Activated CD8-positive, alpha-beta T cell treated with anti-CD3 and anti-CD28 coated beads for 36 hours (primary cell): ENCODE measurements at regions of chr10 and their contacts with region 1.

Region 1: DNA sequence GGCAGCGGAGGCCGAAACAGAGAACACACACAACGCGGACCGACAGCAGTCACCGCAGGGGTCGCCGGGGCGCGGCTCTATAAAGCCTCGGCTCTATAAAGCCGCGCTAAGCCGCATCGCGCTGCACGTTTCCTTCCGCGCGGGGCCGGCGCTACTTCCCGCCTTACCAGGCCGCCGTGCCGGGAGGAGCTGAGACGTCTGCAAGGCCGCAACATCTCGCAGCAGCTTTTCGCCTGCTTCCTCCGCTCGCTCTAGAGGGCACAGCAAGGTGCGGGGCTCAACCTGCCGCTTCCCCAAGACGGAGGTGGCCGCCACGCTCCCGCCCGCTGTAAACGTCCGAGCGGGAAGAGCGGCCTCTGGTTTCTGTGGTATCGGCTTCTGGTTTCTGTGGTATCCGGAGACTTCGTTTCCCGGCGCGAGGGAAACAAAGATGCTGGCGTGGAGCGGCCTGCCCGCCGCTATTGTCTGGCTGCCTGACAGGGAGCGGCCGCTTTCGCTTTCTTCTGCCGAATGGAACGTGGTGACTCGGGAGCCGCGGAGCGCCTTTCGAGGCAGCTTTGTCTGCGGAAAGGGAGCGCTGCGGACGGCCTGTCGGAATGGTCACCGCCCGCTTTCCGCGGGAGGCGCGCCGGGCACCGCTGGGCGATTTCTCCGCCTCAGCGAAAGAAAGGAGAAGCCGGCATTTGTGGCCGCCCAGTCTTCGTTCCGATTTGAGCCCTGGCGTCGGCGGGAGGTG is 91.8 kb downstream of the SPAG6 start:
- DNase-seq: peak; percentile 89
- ATAC-seq: peak; percentile 86
- H3K4me3 Mint-ChIP-seq: peak overlapping the region; percentile 88
- H3K27ac Mint-ChIP-seq: peak overlapping the region; percentile 95
- H3K4me1 Mint-ChIP-seq: peaks cover 47% of the 10 kb centered on the region
- H3K27me3 Mint-ChIP-seq: no peaks in the 10 kb centered on the region
- CTCF ChIP-seq: no peak

Region 2: DNA sequence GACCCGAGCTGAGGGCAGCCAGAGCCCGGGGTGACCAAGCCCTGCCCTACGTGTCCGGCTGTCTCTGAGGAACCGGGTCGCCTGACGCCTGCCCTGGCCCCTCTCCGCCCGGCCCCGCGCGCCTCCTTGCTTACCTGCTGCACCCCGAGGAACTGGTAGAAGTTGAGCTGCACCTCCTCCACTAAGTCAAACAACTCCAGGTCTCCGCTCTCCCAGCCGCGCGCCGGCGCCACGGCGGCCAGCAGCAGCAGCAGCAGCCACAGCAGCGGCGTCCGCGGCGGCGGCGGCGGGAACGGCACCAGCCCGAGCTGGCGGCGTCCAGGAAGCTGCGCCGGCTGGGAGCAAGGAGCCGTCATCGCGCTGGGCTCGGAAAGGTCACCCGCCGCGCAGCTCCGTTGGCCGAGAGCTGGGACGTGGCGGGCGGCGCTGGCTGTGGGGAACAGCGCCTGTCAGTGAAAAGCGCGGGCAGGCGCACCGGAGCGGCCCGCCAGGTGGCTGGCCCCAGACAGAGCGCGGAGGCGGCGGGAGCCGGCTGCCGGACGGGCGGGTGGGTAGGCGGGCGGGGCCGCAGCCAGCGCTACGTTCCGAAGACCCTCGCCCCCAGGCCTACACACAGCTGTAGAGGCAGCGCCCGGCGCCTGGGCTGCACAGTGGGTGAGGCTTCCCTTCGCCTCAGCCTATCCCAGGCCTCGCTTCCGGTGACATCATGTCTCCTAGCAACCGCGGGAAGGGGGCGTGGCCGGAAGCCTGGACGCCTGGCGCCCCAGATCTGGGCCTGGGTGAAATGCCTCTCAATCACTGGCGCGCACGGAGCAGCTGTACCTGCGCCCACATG is 433.8 kb before region 1 on chr10 and contains the start of gene DNAJC1:
- CTCF ChIA-PET with region 1: no interaction called
- POLR2A ChIA-PET with region 1: interaction called, 3 read pairs
- intact Hi-C with region 1: loop called (anchors 10 kb)
- DNase-seq: peak; percentile 99
- ATAC-seq: peak; percentile 93
- H3K4me3 Mint-ChIP-seq: peak within 1 kb of the TSS; percentile 89
- H3K27ac Mint-ChIP-seq: peak within 1 kb of the TSS; percentile 92
- H3K4me1 Mint-ChIP-seq: peaks cover 27% of the 10 kb centered on the region
- H3K27me3 Mint-ChIP-seq: peaks cover 4% of the 10 kb centered on the region
- CTCF ChIP-seq: no peak
- total RNA-seq, gene DNAJC1: 19.3 to 23.7 TPM

Region 3: DNA sequence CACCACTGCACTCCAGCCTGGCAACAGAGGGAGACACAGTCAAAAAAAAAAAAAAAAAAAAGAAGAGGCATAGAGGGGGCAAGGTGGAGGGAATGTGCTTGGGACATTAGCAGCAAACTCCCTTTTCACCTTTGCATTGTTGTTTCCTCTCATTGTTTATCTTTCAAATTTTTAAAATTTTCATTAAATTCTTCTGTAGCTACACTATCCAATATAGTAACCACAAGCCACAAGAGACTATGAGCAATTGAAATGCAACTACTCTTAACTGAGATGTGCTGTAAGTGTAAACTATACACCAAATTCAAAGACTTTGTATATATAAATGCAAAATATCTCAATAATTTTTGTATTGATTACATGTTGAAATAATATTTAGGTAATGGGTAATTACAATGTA is 262.6 kb before region 1 on chr10:
- CTCF ChIA-PET with region 1: no interaction called
- POLR2A ChIA-PET with region 1: no interaction called
- intact Hi-C with region 1: no loop called
- DNase-seq: no peak
- ATAC-seq: no peak
- H3K4me3 Mint-ChIP-seq: no peak overlapping the region
- H3K27ac Mint-ChIP-seq: no peak overlapping the region
- H3K4me1 Mint-ChIP-seq: no peaks in the 10 kb centered on the region
- H3K27me3 Mint-ChIP-seq: peaks cover 20% of the 10 kb centered on the region
- CTCF ChIP-seq: no peak

Region 4: GRCh38 chr10:22316285-22317120 is 120.5 kb before region 1 on chr10 and contains the start of gene COMMD3:
- CTCF ChIA-PET with region 1: no interaction called
- POLR2A ChIA-PET with region 1: interaction called, 15 read pairs
- intact Hi-C with region 1: loop called (anchors 5 kb)
- DNase-seq: peak; percentile 82
- ATAC-seq: peak; percentile 67
- H3K4me3 Mint-ChIP-seq: peak within 1 kb of the TSS; percentile 88
- H3K27ac Mint-ChIP-seq: peak within 1 kb of the TSS; percentile 91
- H3K4me1 Mint-ChIP-seq: peaks cover 32% of the 10 kb centered on the region
- H3K27me3 Mint-ChIP-seq: peaks cover 17% of the 10 kb centered on the region
- CTCF ChIP-seq: no peak
- total RNA-seq, gene COMMD3: 64.7 to 68.7 TPM

Region 5: GRCh38 chr10:22369434-22370072 is 67.5 kb before region 1 on chr10:
- CTCF ChIA-PET with region 1: interaction called, 3 read pairs
- POLR2A ChIA-PET with region 1: no interaction called
- intact Hi-C with region 1: loop called (anchors 10 kb)
- DNase-seq: no peak
- ATAC-seq: peak; percentile 53
- H3K4me3 Mint-ChIP-seq: no peak overlapping the region
- H3K27ac Mint-ChIP-seq: no peak overlapping the region
- H3K4me1 Mint-ChIP-seq: peaks cover 39% of the 10 kb centered on the region
- H3K27me3 Mint-ChIP-seq: peaks cover 4% of the 10 kb centered on the region
- CTCF ChIP-seq: no peak

Region 6: DNA sequence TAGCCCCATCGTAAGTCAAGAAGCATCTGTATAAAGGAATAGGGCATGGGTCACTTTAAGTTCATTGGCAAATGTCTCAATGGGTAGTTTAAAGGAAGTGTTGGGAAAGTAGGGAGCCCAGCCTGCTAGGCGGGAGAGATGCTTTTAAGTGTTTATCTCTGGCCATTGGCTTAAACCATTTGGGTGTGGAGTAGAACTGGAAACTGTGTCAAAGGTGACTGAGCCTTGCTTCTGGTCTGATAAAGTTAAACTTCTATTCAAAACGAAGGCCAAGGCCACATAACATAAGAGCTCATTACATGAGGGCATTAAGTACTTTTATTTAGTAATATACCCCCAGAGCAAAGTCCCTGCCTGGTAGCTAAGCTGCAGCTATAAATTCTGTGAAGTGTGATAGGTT is 57.0 kb after region 1 on chr10:
- CTCF ChIA-PET with region 1: no interaction called
- POLR2A ChIA-PET with region 1: no interaction called
- intact Hi-C with region 1: no loop called
- DNase-seq: no peak
- ATAC-seq: no peak
- H3K4me3 Mint-ChIP-seq: no peak overlapping the region
- H3K27ac Mint-ChIP-seq: no peak overlapping the region
- H3K4me1 Mint-ChIP-seq: peaks cover 16% of the 10 kb centered on the region
- H3K27me3 Mint-ChIP-seq: peaks cover 17% of the 10 kb centered on the region
- CTCF ChIP-seq: no peak

Region 7: DNA sequence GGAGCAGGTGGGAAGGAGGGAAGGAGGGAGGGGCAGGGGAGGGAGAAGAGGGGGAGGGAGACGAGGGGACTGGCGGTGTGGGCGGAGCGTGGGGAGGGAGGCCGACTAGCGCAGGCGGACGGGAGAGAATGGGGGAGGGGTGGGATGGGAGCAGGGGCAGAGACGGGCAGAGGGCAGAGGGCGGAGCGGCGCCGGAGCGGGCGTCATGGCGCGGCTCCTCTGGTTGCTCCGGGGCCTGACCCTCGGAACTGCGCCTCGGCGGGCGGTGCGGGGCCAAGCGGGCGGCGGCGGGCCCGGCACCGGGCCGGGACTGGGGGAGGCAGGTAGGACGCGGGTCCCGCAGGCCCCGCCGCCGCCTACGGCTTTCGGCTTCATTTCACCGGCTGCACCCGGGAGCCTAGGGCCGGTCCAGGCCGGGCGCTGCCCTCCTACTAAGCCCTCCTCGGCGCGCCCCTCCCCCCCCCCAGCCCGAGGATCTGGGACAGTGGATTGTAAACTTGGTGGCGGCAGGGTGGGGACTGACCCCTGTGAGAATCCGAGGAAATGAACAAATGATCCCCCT is 658.4 kb after region 1 on chr10 and contains the start of gene MSRB2:
- CTCF ChIA-PET with region 1: no interaction called
- POLR2A ChIA-PET with region 1: no interaction called
- intact Hi-C with region 1: no loop called
- DNase-seq: peak; percentile 80
- ATAC-seq: peak; percentile 81
- H3K4me3 Mint-ChIP-seq: peak within 1 kb of the TSS; percentile 95
- H3K27ac Mint-ChIP-seq: peak within 1 kb of the TSS; percentile 93
- H3K4me1 Mint-ChIP-seq: peaks cover 26% of the 10 kb centered on the region
- H3K27me3 Mint-ChIP-seq: no peaks in the 10 kb centered on the region
- CTCF ChIP-seq: no peak
- total RNA-seq, gene MSRB2: 6.9 to 9.1 TPM